ENCODE measurements at regions of chr22 and their contacts with region 1.

Region 1: GRCh38 chr22:29040385-29041275 is 21.0 kb downstream of the C22orf31 start:
- DNase-seq: peak; percentile 73
- H3K4me3 ChIP-seq: no peak overlapping the region; a peak in 1 of 4 replicates
- H3K27ac ChIP-seq: peak overlapping the region in 1 of 2 experiments; percentile 80; a peak in 2 of 4 replicates
- H3K4me1 ChIP-seq: peaks cover 2 to 28% of the 10 kb centered on the region in 2 experiments; a peak in 3 of 4 replicates
- H3K27me3 ChIP-seq: no peaks in the 10 kb centered on the region
- CTCF ChIP-seq: peak; percentile 98
- EP300 ChIP-seq: no peak
- RAD21 ChIP-seq: peak; percentile 97

Region 2: GRCh38 chr22:28600546-28601143 is 440.0 kb before region 1 on chr22:
- CTCF ChIA-PET with region 1: interaction called, 29 read pairs
- POLR2A ChIA-PET with region 1: no interaction called
- DNase-seq: peak; percentile 25
- H3K4me3 ChIP-seq: no peak overlapping the region; a peak in 1 of 4 replicates
- H3K27ac ChIP-seq: no peak overlapping the region
- H3K4me1 ChIP-seq: peaks cover 0 to 3% of the 10 kb centered on the region in 2 experiments; a peak in 2 of 4 replicates
- H3K27me3 ChIP-seq: no peaks in the 10 kb centered on the region
- CTCF ChIP-seq: peak; percentile 63
- EP300 ChIP-seq: no peak
- RAD21 ChIP-seq: peak; percentile 87

Region 3: DNA sequence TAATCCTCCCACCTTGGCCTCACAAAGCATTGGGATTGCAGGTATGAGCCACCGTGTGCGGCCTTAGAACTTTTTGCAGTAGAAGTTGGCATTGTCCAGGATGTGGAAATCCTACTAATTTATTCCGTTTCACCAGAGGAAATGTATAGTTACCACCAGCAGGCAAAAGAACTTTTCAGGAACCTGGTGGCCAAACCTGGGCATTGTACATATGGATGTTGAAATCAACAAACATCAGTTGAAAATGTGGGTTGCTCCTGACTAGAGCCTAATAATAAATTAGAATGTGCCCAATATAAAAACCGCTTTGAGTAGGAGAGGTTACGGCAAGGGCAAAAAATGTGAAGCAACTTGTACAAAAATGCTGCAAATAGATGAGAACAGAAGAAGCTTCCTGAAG is 199.5 kb before region 1 on chr22:
- CTCF ChIA-PET with region 1: interaction called, 12 read pairs
- POLR2A ChIA-PET with region 1: no interaction called
- DNase-seq: no peak
- H3K4me3 ChIP-seq: no peak overlapping the region
- H3K27ac ChIP-seq: no peak overlapping the region
- H3K4me1 ChIP-seq: no peaks in the 10 kb centered on the region
- H3K27me3 ChIP-seq: no peaks in the 10 kb centered on the region
- CTCF ChIP-seq: peak; percentile 9; the same call in 1 of the 2 replicates
- EP300 ChIP-seq: no peak
- RAD21 ChIP-seq: no peak

Region 4: DNA sequence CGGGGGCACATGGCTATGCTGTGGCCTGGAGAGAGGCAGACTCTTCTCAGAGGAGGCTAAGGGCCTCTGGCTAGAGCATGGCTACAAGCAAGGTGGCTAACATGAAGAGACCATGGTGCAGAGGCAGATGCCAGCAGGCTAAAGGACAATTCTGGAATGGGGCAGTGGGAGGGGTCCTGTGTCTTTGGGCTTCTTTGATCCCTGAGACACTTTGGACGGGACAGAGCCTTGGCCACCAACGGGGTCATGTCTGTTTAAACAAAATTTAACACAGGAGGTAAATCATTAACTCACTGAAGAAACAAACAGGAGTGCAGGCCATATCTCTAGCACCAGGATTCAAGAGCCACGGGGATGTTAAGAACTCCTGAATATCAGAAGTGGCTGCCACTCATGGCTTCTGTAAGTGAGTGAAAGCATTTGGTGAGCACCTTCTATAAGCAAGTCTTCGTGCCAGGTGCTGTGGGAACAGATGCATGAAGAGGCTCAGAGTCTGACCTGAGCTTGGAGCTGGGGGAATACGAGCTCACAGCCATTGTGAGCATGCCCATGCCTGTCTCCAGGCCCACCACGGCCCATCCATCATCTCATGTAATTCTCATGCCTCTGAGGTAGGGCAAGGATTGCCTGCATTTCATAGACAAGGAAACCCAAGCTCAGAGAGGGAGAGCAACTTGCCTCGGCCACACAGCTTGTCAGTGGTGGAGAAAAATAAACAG is 175.6 kb before region 1 on chr22:
- CTCF ChIA-PET with region 1: interaction called, 17 read pairs
- POLR2A ChIA-PET with region 1: no interaction called
- DNase-seq: no peak
- H3K4me3 ChIP-seq: no peak overlapping the region
- H3K27ac ChIP-seq: no peak overlapping the region
- H3K4me1 ChIP-seq: no peaks in the 10 kb centered on the region; a peak in 1 of 4 replicates
- H3K27me3 ChIP-seq: no peaks in the 10 kb centered on the region
- CTCF ChIP-seq: no peak
- EP300 ChIP-seq: no peak
- RAD21 ChIP-seq: no peak

Region 5: DNA sequence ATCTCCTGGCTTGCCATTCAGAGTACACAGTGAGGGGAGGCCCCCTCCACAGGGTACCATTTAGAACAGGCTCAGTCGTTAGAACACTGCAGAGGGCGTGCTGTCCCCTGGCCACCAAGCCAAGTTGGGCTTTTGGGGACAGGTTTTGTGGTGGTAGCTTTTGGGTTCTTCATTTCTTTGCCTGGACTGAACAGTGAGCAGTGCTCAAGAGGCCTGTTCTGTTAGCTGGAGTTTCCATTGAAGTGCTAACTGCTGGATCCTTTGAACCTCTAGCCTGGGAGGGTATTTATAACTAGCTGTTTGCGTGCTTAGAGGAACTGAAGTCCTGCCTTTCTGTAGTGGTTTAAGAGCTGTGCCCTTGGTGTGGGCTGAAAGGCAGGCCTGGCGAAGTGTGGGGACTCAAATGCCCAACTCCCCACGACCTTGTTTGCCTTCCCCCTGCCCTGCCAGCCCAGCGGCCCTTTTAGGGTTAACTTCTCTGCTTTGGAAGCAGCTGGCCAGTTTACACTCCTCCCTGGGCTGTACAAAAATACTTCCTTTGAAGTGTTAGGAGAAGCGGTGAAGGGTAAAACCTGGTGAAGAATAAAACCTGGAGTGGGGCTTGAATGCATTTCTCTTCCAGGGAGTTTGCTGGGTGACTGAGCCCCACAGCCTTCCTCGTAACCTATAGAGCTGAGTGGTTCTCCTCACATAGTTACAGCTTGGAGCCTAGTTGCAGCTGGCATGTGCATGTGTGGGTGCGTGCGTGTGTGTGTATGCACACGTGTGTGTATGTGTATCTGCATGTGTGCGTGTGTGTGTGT is 122.7 kb before region 1 on chr22:
- CTCF ChIA-PET with region 1: interaction called, 13 read pairs
- POLR2A ChIA-PET with region 1: no interaction called
- DNase-seq: peak; percentile 48
- H3K4me3 ChIP-seq: no peak overlapping the region
- H3K27ac ChIP-seq: no peak overlapping the region
- H3K4me1 ChIP-seq: peaks cover 7 to 23% of the 10 kb centered on the region in 2 experiments; a peak in 2 of 4 replicates
- H3K27me3 ChIP-seq: no peaks in the 10 kb centered on the region
- CTCF ChIP-seq: no peak
- EP300 ChIP-seq: no peak
- RAD21 ChIP-seq: no peak

Region 6: GRCh38 chr22:29055192-29055830 is 14.7 kb after region 1 on chr22:
- CTCF ChIA-PET with region 1: interaction called, 15 read pairs
- POLR2A ChIA-PET with region 1: no interaction called
- DNase-seq: no peak
- H3K4me3 ChIP-seq: no peak overlapping the region
- H3K27ac ChIP-seq: no peak overlapping the region
- H3K4me1 ChIP-seq: no peaks in the 10 kb centered on the region; a peak in 1 of 4 replicates
- H3K27me3 ChIP-seq: no peaks in the 10 kb centered on the region
- CTCF ChIP-seq: no peak
- EP300 ChIP-seq: no peak
- RAD21 ChIP-seq: no peak

Region 7: DNA sequence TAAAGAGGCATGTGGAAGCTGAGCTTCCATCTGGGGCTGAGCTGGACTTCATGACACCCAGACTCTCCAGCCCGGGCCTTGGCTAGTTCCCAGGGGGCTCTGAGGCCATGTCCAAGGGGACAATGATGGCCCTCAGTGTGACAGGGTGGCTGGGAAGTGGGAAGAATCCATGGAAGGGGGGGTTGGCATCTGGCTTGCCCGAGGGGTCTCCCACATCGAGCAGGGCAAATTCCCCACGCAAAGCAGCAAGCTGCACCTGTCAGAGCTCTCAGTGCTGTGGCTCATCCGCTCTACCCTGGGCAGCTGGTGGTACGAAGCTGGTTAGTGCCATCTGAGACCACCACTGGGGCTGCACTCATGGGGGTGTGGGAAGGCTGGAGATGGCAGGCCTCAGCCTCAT is 357.2 kb after region 1 on chr22:
- CTCF ChIA-PET with region 1: no interaction called
- POLR2A ChIA-PET with region 1: no interaction called
- DNase-seq: no peak
- H3K4me3 ChIP-seq: no peak overlapping the region
- H3K27ac ChIP-seq: no peak overlapping the region
- H3K4me1 ChIP-seq: peaks cover 0 to 3% of the 10 kb centered on the region in 2 experiments; a peak in 1 of 4 replicates
- H3K27me3 ChIP-seq: no peaks in the 10 kb centered on the region
- CTCF ChIP-seq: no peak
- EP300 ChIP-seq: no peak
- RAD21 ChIP-seq: no peak